Right ventricle myocardium inferior (tissue), 1 donor: ENCODE measurements at regions of chr7 and their contacts with region 1.

Region 1: DNA sequence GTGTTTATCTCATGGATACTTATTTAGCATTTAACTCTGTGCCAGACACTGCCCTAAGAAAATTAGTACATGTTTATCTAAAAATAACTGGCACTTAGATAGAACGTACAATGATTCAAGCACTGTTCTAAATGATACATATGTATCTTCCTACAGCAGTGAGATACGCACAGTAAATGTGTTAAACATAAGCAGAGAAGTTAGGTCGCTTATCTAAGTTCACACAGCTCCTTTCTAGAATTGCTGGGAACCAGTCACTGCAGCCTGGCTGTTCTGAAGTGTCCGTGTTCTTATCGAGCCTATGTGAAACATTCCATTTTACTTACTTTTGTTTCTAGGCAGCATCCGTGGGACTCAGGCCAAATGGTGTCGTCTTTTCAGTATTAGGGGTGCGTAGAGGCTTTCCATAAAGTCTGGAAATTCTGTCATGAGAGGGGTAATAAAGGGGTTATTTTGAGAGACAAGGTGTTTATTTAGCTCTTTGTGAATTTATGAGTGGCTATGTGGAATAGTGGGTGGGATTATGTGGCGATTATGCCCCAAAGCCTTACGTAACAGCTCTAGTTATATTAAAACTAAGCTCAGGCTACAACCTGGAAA is 186.9 kb downstream of the SND1 start:
- DNase-seq: no peak
- ATAC-seq: peak; percentile 23

Region 2: DNA sequence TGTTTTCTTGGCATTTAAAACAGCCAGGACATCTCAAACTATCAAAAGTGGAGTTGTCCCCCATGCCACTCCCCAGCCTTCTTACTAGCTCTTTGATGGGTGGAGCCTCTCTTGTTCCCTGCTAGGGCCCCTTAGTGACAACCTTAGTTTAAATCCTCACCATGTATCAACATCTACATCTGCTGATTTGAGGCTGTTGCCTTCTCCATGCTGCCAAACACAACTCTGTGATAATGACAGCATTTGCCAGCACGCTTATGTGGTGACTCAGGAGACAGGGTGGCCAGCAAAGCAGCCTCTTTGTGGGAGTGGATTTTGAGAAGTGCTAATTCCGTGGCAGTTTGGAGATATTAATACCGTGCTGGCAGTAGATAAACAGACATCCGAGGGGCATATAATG is 46.9 kb after region 1 on chr7:
- intact Hi-C with region 1: loop called (anchors 1 kb)
- DNase-seq: no peak
- ATAC-seq: peak; percentile 69